Activated naive CD4-positive, alpha-beta T cell treated with anti-CD3 and anti-CD28 coated beads for 36 hours (primary cell): ENCODE measurements at regions of chr18 and their contacts with region 1.

Region 1: DNA sequence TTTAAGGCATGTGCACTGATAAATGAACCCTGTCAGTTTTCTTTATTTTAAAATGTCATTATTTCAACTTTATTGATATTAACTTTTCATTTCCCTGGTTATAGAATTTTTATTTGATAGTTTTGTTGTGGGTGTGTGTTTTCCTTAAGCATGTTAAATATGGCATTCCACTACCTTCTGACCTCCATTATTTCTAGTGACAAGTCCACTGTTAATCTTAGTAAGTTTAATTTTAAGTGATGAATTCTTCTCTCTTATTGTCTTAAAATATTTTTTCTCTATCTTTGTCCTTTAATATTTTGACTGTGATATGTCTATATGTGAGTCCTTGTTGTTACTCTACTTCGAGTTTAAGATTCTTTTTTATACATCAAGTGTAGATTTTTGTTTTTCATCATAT is 685.7 kb downstream of the GALR1 start:
- DNase-seq: no peak
- H3K4me3 Mint-ChIP-seq: no peak overlapping the region
- H3K27ac Mint-ChIP-seq: no peak overlapping the region
- H3K4me1 Mint-ChIP-seq: no peaks in the 10 kb centered on the region
- H3K27me3 Mint-ChIP-seq: peaks cover 3% of the 10 kb centered on the region

Region 2: DNA sequence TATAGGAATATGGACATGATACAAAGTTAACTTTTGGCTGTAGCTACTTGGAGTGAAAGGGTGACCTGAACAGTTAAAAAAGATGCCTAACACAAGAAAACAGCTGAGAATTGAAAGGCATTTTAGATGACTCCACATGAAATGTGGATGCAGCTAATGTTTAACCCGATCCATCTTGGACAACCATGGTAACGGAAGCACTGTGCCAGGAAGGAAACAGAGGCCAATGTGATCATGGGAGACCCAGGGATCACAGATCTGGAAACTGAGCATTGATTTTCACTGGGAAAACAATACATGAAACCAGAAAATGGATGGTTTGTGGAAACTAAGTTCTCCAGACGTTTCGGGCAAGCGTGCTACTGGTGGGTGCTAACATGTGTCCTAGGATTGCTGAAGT is 16.6 kb before region 1 on chr18:
- CTCF ChIA-PET with region 1: interaction called, 12 read pairs
- intact Hi-C with region 1: no loop called
- DNase-seq: no peak
- H3K4me3 Mint-ChIP-seq: no peak overlapping the region
- H3K27ac Mint-ChIP-seq: no peak overlapping the region
- H3K4me1 Mint-ChIP-seq: no peaks in the 10 kb centered on the region
- H3K27me3 Mint-ChIP-seq: peaks cover 10% of the 10 kb centered on the region

Region 3: DNA sequence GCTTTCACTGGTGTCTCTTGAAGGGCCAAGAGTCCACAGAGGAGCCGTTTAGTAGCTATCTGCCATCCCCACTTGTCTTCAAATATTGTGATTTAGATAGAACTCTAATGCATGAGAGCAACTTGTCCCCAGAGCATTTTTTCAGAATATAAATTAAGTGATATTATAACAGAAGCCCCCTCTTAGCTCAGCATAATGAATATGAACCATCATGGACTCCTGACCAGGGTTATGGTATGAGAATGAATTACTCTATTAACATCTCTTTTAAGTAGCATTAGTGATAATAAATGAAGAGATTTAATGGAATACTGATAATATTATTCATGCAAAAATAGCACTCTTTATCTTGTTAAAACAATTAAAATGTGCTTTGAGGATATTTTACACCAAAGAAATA is 23.9 kb after region 1 on chr18:
- CTCF ChIA-PET with region 1: no interaction called
- intact Hi-C with region 1: no loop called
- DNase-seq: no peak
- H3K4me3 Mint-ChIP-seq: no peak overlapping the region
- H3K27ac Mint-ChIP-seq: no peak overlapping the region
- H3K4me1 Mint-ChIP-seq: no peaks in the 10 kb centered on the region
- H3K27me3 Mint-ChIP-seq: peaks cover 6% of the 10 kb centered on the region